ENCODE measurements at regions of chr2 and their contacts with region 1.

Region 1: DNA sequence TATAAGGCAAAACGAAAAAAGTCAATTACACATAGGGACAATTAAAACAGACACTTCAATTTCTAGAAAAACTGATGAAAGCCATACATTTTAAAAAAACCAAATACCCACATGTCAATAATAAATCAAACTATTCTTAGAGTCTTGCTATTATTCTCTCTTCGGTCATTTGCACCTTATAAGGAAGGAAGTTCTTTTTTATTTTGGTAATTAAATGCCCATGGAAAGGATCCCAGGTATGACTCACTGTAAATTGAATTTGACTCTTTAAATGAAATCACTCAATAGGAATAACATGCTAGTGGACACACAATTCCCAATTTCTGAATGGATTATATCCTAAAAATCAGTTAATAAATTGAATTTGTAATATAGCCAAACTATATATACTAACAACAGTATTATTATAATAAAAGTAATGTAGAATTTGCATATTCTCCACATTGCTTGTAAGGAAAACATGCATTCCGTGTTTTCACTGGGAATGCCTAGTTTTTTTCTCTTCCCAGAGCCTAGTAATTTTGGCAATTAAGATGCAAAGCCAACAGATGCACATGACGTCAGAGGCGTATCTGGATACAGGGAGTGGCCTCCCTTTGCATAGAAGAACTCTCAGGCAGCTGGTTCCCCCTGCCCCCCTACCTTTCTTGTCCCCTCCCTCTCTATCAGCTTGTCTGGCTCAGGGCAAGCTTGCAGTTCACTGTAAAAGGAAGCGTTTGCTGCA is 153.5 kb upstream of the PGAP1 start:
- DNase-seq: no peak
- H3K4me3 ChIP-seq: no peak overlapping the region
- CTCF ChIP-seq: no peak
- POLR2A ChIP-seq: no peak

Region 2: GRCh38 chr2:197042739-197043196 is 37.2 kb before region 1 on chr2:
- intact Hi-C with region 1: no loop called
- DNase-seq: no peak
- H3K4me3 ChIP-seq: no peak overlapping the region
- CTCF ChIP-seq: no peak
- POLR2A ChIP-seq: no peak

Region 3: DNA sequence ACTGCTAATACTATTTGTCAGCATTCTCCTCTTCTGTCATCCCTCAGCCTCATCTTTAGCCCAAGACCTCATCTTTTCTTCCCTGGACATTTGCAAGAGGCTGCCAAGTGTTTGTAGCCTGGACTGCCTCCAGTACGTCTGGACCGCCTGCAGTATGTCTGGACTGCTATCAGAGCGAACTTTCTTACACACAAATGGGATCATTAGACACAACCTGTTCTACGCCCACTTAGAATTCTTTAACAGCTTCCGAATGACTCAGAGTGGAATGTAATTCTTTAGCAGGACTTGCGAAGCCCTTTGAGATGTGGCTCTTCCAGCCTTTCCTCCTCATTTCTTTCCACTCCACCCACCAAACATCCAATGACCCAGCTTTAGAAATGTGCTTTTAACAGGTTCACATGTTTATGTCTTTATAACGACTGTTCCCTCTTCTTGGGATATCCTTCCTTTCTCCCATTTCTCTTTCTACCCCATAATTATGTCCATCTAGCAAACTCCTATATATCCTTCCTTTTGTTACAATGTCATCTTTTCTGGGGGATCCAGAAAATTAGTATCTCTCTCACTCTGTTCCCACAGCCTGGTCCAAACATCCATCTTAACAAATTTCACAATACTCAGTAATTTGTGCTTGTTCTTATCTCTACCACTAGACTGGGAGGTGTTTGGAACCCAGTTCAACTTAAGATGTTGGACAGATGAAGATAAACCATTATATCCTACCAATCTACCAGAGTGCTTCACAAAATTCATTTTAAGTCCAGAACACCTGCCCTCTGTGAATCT is 17.8 kb after region 1 on chr2:
- intact Hi-C with region 1: loop called (anchors 1 kb)
- DNase-seq: no peak
- H3K4me3 ChIP-seq: no peak overlapping the region
- CTCF ChIP-seq: no peak
- POLR2A ChIP-seq: no peak

Region 4: GRCh38 chr2:197219636-197220035 is 139.6 kb after region 1 on chr2:
- intact Hi-C with region 1: no loop called
- DNase-seq: no peak
- H3K4me3 ChIP-seq: no peak overlapping the region
- CTCF ChIP-seq: no peak
- POLR2A ChIP-seq: no peak